Left ventricle myocardium inferior (tissue), 1 donor: ENCODE measurements at regions of chr17 and their contacts with region 1.

Region 1: DNA sequence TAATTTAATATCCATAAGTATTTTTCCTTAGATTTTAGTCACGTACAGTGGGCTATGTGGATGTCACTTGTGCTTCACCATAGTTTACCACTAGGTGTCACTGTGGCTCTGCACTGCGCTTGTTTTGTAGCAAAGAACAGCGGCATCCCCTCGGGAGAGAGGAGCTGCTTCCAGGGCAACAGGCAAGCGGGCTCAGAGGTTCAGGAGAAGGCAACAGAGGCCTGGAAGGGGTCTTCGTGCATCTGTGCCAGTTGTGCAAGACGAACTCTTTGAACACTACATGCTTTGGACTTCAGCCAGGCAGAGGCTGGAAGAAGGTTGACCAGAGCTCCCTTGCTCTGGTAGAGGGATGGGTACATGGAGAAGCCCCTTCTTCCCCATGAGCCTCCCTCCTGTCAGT is 20.6 kb downstream of the CYB561 start:
- DNase-seq: peak; percentile 63
- H3K4me3 ChIP-seq: no peak overlapping the region
- H3K27ac ChIP-seq: no peak overlapping the region
- H3K4me1 ChIP-seq: peaks cover 8% of the 10 kb centered on the region
- H3K27me3 ChIP-seq: no peaks in the 10 kb centered on the region
- CTCF ChIP-seq: peak; percentile 98

Region 2: DNA sequence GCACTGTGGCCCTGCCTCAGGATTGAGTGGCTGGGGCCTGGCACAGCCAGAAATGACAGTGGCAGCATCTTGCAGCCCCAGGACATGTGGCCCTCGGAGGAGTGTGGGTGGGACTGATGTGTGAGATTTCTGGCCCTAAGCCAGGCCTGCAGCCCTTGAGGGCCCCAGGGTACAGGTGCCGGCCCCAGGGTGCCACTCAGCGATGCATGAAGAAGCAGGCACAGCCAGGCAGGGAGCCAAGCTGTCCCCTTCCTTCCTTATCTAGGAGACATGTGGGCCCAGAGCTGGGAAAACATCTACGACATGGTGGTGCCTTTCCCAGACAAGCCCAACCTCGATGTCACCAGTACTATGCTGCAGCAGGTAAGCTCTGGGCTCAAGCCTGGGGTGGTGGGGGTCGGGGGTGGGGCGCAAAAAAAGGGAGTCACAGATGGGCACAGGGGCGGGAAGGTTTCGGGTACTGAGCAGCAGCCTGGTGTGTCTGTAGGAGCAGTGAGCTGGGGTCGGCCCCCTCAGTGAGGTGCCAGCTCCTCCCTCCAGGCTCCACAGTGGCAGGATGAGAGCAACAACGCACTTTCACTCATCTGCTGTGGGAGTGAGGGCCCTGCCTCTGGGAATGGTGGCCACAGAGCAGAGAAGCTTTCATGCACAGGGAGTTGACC is 55.5 kb after region 1 on chr17:
- intact Hi-C with region 1: loop called (anchors 5 kb)
- DNase-seq: no peak
- H3K4me3 ChIP-seq: no peak overlapping the region
- H3K27ac ChIP-seq: no peak overlapping the region
- H3K4me1 ChIP-seq: peaks cover 35% of the 10 kb centered on the region
- H3K27me3 ChIP-seq: peaks cover 11% of the 10 kb centered on the region
- CTCF ChIP-seq: no peak

Region 3: GRCh38 chr17:63611354-63611753 is 185.9 kb after region 1 on chr17:
- intact Hi-C with region 1: loop called (anchors 5 kb)
- DNase-seq: no peak
- H3K4me3 ChIP-seq: no peak overlapping the region
- H3K27ac ChIP-seq: no peak overlapping the region
- H3K4me1 ChIP-seq: no peaks in the 10 kb centered on the region
- H3K27me3 ChIP-seq: no peaks in the 10 kb centered on the region
- CTCF ChIP-seq: no peak